ENCODE measurements at regions of chr21 and their contacts with region 1.

Region 1: GRCh38 chr21:41361786-41362604 is at the start of gene MX2:
- H3K4me3 Mint-ChIP-seq: peak within 1 kb of the TSS; percentile 92
- H3K27ac Mint-ChIP-seq: peak within 1 kb of the TSS; percentile 99
- H3K4me1 Mint-ChIP-seq: peaks cover 50% of the 10 kb centered on the region
- H3K27me3 Mint-ChIP-seq: no peaks in the 10 kb centered on the region

Region 2: DNA sequence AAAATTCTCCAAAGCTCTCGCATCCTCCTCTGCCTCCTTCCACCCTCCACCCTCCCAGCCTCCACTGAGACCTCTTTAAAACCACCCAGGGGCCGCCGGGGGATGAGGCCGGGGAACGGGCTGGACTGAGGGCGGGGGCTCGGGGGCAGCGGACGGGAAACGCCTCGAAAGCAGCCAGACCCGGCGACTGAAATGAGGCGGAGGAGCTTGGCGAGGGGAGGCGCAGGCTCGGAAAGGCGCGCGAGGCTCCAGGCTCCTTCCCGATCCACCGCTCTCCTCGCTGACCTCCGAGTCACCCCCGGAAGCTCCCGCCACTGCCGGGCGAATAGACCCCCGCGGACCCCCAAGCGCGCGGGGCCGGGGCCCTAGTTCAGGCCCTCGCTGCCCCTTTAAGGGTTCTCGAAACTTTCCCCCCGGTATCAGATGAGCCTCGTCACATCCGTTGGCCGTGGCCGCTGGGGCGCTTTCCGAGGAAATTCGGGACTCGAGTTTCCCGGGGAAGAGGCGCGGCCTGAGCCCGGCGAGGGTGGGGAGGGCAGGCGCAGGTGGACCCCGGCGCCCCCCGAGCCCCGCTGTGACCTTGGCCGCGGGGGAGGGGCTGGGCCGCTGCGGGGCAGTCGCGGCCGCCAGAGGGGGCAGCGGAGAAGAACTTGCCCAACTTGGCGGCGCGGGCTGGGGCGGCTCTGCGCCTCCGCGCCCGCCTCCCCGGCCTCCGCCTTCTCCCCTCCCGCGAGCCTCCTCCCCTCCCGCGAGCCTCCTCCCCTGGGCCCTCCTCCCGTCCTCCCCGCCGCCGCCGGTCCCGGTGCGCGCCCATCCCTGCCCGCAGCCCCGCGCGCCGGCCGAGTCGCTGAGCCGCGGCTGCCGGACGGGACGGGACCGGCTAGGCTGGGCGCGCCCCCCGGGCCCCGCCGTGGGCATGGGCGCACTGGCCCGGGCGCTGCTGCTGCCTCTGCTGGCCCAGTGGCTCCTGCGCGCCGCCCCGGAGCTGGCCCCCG is 194.3 kb before region 1 on chr21 and contains the start of gene BACE2:
- intact Hi-C with region 1: no loop called
- H3K4me3 Mint-ChIP-seq: peak within 1 kb of the TSS; percentile 75
- H3K27ac Mint-ChIP-seq: no peak within 1 kb of the TSS
- H3K4me1 Mint-ChIP-seq: no peaks in the 10 kb centered on the region
- H3K27me3 Mint-ChIP-seq: peaks cover 57% of the 10 kb centered on the region

Region 3: GRCh38 chr21:41396506-41397075 is 34.6 kb after region 1 on chr21:
- intact Hi-C with region 1: loop called (anchors 2 kb)
- H3K4me3 Mint-ChIP-seq: no peak overlapping the region
- H3K27ac Mint-ChIP-seq: peak overlapping the region; percentile 81
- H3K4me1 Mint-ChIP-seq: peaks cover 47% of the 10 kb centered on the region
- H3K27me3 Mint-ChIP-seq: no peaks in the 10 kb centered on the region

Region 4: DNA sequence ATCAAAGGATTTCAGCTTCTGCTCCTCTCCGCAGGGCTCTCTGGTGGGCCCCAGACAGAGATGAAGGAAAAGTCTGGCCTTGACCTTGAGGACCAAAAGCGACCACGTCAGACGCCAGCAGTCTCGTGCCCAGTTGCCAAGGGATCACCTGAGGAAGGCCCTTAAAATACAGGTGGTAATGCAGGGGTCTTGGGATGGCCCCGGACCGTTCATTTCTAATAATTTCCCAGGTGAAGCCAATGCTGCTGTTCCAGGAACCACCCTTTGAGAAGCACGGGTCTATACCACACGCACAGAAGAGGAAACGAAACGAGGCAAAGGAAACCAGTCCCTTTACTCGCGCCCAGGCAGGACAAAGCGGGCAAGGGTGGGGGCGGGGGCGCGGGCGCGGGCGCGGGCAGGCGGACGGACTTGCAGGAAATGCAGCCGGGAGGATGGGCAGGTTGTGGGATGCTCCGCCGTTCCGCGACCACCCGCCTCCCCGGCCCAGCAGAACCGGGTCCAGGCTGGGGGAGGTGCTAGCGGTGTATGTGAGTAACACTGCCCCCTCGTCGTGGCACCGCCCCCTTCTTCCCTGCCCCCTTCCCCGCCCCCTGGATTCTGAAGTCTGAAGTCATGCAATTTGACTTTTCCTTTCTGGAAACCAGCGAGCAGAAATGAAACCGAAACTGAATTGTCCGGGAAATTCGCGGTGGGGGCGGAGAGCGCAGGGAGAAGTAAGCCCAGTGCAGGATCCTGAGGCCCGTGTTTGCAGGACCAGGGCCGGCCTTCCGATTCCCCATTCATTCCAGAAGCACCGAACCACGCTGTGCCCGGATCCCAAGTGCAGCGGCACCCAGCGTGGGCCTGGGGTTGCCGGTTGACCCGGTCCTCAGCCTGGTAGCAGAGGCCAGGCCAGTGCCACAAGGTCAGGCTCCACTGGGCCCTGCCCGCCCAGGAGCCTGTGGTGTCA is 58.2 kb after region 1 on chr21:
- intact Hi-C with region 1: loop called (anchors 2 kb)
- H3K4me3 Mint-ChIP-seq: peak overlapping the region; percentile 81
- H3K27ac Mint-ChIP-seq: peak overlapping the region; percentile 94
- H3K4me1 Mint-ChIP-seq: peaks cover 60% of the 10 kb centered on the region
- H3K27me3 Mint-ChIP-seq: no peaks in the 10 kb centered on the region